ENCODE measurements at regions of chr16 and their contacts with region 1.

Region 1: DNA sequence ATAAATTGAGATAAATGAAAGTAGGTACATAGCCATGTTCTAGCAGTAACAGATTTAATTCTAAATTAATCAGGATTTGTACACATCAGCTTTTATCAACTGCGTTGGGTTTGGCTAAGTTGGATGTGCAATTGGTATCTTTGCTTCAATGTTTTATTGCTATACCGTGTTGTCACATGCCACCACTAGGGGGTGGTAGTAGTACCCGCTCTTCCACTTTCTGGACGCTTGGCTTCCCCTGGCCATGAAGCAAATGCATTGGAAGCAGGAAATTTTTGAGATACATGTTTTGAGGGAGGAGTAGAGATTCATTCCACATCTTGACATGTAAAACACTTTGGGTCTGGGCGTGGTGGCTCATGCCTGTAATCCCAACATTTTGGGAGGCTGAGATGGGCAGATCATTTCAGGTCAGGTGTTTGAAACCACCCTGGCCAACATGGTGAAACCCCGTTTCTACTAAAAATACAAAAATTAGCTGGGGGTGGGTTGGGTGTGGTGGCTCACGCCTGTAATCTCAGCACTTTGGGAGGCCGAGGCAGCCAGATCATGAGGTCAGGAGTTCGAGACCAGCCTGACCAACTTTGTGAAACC is 58.6 kb downstream of the EMP2 start:
- DNase-seq: no peak
- H3K4me3 ChIP-seq: no peak overlapping the region
- H3K27ac ChIP-seq: no peak overlapping the region
- H3K4me1 ChIP-seq: peaks cover 0 to 12% (median 0%) of the 10 kb centered on the region in 3 donors
- H3K27me3 ChIP-seq: no peaks in the 10 kb centered on the region
- CTCF ChIP-seq: peak; percentile 67 to 90 (median 86)
- POLR2A ChIP-seq: no peak

Region 2: GRCh38 chr16:10569621-10570020 is 47.8 kb after region 1 on chr16:
- intact Hi-C with region 1: loop called (anchors 5 kb)
- DNase-seq: no peak
- H3K4me3 ChIP-seq: no peak overlapping the region
- H3K27ac ChIP-seq: peak overlapping the region in 1 of 4 donors; percentile 9
- H3K4me1 ChIP-seq: peaks cover 0 to 56% (median 9%) of the 10 kb centered on the region in 3 donors
- H3K27me3 ChIP-seq: no peaks in the 10 kb centered on the region
- CTCF ChIP-seq: no peak
- POLR2A ChIP-seq: no peak

Region 3: DNA sequence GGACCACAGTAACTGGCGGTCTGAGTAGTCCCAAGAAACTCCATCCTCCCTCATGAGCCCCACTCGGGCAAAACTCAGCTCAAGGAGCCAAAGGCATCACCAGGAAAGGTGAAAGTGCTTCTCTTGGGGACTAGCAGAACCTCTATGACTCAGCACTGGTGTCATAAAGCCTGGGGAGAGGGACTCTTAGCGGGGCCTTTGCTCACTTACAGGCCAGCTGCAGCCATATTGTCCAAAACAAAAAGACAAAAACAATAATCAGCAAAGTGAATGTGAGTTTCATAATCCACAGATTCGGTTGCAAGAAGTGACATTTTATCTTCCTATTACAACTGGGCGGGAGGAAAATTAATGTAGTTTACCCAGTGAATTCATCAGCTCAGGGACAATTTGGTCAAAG is 173.1 kb after region 1 on chr16 and contains the start of gene TEKT5:
- intact Hi-C with region 1: no loop called
- DNase-seq: no peak
- H3K4me3 ChIP-seq: no peak within 1 kb of the TSS
- H3K27ac ChIP-seq: no peak within 1 kb of the TSS
- H3K4me1 ChIP-seq: no peaks in the 10 kb centered on the region
- H3K27me3 ChIP-seq: no peaks in the 10 kb centered on the region
- CTCF ChIP-seq: no peak
- POLR2A ChIP-seq: no peak
- total RNA-seq, gene TEKT5: not detected

Region 4: GRCh38 chr16:10737068-10737625 is 215.4 kb after region 1 on chr16:
- intact Hi-C with region 1: loop called (anchors 2 kb)
- DNase-seq: no peak
- H3K4me3 ChIP-seq: peak overlapping the region in 1 of 4 donors; percentile 16
- H3K27ac ChIP-seq: peak overlapping the region; percentile 69 to 81 (median 78)
- H3K4me1 ChIP-seq: peaks cover 10 to 30% (median 23%) of the 10 kb centered on the region in 3 donors
- H3K27me3 ChIP-seq: no peaks in the 10 kb centered on the region
- CTCF ChIP-seq: peak; percentile 94 to 97 (median 96)
- POLR2A ChIP-seq: no peak

Region 5: DNA sequence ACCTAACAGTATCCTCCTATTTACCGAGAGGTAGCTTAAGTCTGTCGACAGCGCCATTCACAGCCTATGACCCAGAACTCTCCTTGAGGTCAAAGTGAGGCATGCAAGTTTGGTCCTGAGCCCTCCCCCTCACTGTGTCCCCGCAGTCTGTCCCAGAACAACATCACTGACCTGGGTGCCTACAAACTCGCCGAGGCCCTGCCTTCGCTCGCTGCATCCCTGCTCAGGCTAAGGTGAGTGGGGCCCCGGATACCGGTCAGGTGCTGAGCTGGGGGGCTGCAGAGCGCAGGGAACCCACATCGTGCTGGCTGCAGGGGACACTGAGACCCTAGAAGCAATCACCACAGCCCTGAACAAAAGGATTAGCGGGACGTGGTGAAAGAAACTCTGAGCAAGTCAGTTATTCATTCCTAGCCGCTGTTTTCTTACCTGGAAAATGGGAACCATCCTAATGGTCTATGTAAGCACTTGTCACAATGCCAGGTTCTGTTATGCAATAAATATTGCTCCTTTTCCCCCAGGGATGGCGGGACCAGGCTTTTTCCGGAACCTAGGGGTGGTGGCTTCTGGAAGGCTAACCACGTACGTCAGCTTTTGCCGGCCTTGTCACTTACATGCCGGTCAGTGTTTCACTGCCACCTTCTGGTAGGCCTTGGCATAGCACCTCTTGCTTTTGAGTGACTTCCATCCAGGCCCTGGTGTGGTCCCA is 396.7 kb after region 1 on chr16:
- intact Hi-C with region 1: loop called (anchors 5 kb)
- DNase-seq: peak; percentile 38
- H3K4me3 ChIP-seq: peak overlapping the region in 1 of 4 donors; percentile 7
- H3K27ac ChIP-seq: peak overlapping the region in 2 of 4 donors; percentile 42 to 53
- H3K4me1 ChIP-seq: peaks cover 0 to 50% (median 15%) of the 10 kb centered on the region in 3 donors
- H3K27me3 ChIP-seq: no peaks in the 10 kb centered on the region
- CTCF ChIP-seq: peak; percentile 82 to 99 (median 96)
- POLR2A ChIP-seq: no peak